HEK293 (cell line): ENCODE measurements at regions of chr6 and their contacts with region 1.

Region 1: GRCh38 chr6:157981395-157982296 is at the start of gene SYNJ2:
- H3K4me3 ChIP-seq: peak within 1 kb of the TSS; percentile 71
- H3K27ac ChIP-seq: peak within 1 kb of the TSS; percentile 81; the same call in 1 of the 2 replicates
- H3K4me1 ChIP-seq: peaks cover 12% of the 10 kb centered on the region
- CTCF ChIP-seq: 0 out of 2 replicates have a peak, but pooled peaks have one; percentile 39

Region 2: DNA sequence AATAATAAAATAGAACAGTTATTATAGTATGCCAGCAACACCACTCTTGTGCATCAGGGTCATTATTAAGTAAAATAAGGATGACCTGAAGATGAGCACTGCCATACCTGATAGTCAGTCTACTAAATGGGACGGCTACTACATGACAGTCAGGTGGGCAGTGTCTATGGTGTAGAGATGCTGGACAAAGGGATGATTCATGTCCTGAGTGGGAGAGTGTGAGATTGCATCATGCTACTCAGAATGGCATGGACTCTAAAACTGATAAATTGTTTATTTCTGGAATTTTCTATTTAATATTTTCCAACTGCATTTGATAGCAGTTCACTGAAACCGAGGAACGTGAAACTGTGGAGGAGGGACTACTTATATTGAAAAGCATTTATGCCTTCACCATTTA is 119.8 kb before region 1 on chr6:
- CTCF ChIA-PET with region 1: no interaction called
- POLR2A ChIA-PET with region 1: no interaction called
- H3K4me3 ChIP-seq: no peak overlapping the region
- H3K27ac ChIP-seq: no peak overlapping the region
- H3K4me1 ChIP-seq: peaks cover 30% of the 10 kb centered on the region
- CTCF ChIP-seq: no peak

Region 3: GRCh38 chr6:158002951-158003853 is 21.6 kb after region 1 on chr6:
- CTCF ChIA-PET with region 1: interaction called, 22 read pairs
- POLR2A ChIA-PET with region 1: interaction called, 8 read pairs
- H3K4me3 ChIP-seq: no peak overlapping the region
- H3K27ac ChIP-seq: no peak overlapping the region
- H3K4me1 ChIP-seq: peaks cover 3% of the 10 kb centered on the region
- CTCF ChIP-seq: no peak

Region 4: GRCh38 chr6:158417760-158418098 is 436.1 kb after region 1 on chr6:
- CTCF ChIA-PET with region 1: no interaction called
- POLR2A ChIA-PET with region 1: no interaction called
- H3K4me3 ChIP-seq: no peak overlapping the region
- H3K27ac ChIP-seq: no peak overlapping the region
- H3K4me1 ChIP-seq: no peaks in the 10 kb centered on the region
- CTCF ChIP-seq: no peak

Region 5: GRCh38 chr6:158529629-158530028 is 548.0 kb after region 1 on chr6:
- CTCF ChIA-PET with region 1: no interaction called
- POLR2A ChIA-PET with region 1: no interaction called
- H3K4me3 ChIP-seq: no peak overlapping the region
- H3K27ac ChIP-seq: no peak overlapping the region
- H3K4me1 ChIP-seq: no peaks in the 10 kb centered on the region
- CTCF ChIP-seq: no peak